Uterus (tissue), 4 donors: ENCODE measurements at regions of chr18 and their contacts with region 1.

Region 1: DNA sequence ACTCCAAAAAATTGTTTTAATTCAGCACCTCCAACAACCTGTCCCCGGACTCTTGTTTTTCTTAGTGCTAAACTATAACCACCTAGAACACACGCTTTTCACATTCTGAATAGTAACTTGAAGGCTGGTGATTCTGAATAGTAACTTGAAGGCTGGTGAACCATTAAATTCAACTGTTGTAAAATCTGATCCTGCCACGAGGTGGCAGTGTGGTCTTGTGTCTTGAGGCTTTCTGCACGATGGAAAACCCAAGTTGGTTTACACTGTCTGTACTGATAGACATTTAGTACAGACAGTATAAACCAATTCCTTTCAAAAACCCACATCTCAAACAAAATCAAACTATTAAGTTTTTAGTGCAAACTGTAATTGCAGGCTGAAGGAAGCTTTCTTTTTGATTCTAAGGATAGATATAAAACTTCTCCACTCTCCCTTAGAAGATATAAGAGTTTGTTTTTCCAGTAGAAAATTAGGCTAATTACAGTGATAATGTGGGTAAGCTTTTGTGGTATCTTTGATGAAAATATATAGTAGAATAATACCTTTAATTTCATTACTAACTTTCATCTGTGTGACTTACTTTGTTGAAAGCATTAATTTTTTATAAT is 57.6 kb downstream of the VAPA start:
- DNase-seq: peak; percentile 71 to 88
- H3K4me3 ChIP-seq: no peak overlapping the region
- H3K27ac ChIP-seq: no peak overlapping the region
- H3K4me1 ChIP-seq: peaks cover 0 to 4% of the 10 kb centered on the region in 2 donors
- H3K27me3 ChIP-seq: no peaks in the 10 kb centered on the region
- CTCF ChIP-seq: peak; percentile 73 to 95 (median 87)
- POLR2A ChIP-seq: no peak

Region 2: DNA sequence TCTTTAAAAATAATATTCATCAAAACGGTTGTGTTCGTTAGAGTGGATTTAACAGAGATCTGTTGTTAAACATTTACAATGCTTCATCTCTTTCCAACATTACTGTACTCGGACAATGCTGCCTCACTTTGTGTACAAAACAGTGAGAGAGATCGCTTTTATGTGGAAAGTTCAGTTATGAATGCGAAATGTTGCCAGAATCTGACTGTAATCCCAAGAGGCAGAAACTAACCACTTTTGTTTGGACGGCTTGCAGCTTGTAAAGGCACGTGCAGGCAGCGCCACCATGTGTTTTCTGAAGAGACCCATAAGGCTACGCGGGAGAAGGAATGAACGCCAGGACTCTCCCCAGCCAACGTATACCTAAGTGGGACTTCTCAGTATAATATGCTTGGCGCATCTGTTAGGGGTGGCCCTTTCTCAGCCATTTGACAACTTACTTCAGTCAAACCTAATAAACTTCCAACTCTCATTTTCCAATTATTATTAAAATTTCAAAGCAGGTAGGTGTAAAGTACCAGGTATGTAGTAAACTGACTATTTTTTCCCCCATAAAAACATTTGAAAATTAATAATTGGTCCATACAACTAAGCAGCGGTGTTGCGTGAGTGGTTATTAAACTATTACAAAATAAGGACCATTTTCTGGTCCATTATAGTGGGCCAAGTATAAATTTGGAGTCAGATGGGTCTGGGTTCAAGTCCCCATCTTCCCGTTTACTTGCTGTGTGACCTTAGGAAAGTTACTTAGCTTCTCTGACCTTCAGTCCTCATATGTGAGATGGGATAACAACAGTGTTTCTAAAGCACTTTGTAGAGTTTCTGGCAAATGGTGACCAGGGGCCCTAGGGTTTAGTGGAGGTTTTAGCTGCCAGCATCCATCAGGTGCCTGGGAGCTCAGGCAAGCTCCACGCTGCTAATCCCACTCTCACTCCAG is 548.9 kb after region 1 on chr18:
- intact Hi-C with region 1: loop called (anchors 2 kb)
- DNase-seq: peak; percentile 86 to 91
- H3K4me3 ChIP-seq: no peak overlapping the region
- H3K27ac ChIP-seq: peak overlapping the region; percentile 53
- H3K4me1 ChIP-seq: peaks cover 9 to 27% of the 10 kb centered on the region in 2 donors
- H3K27me3 ChIP-seq: no peaks in the 10 kb centered on the region
- CTCF ChIP-seq: peak; percentile 91 to 94 (median 92)
- POLR2A ChIP-seq: no peak